ENCODE measurements at regions of chr5 and their contacts with region 1.

Region 1: GRCh38 chr5:140432916-140433315 is 31.3 kb downstream of the ANKHD1 start:
- DNase-seq: no peak
- ATAC-seq: no peak
- H3K4me3 ChIP-seq: no peak overlapping the region
- H3K4me3 Mint-ChIP-seq: no peak overlapping the region
- H3K27ac ChIP-seq: no peak overlapping the region
- H3K27ac Mint-ChIP-seq: no peak overlapping the region
- H3K4me1 ChIP-seq: peaks cover 0 to 3% of the 10 kb centered on the region in 2 donors
- H3K4me1 Mint-ChIP-seq: peaks cover 20% of the 10 kb centered on the region
- H3K27me3 ChIP-seq: no peaks in the 10 kb centered on the region
- H3K27me3 Mint-ChIP-seq: no peaks in the 10 kb centered on the region
- CTCF ChIP-seq: no peak

Region 2: GRCh38 chr5:140344683-140345423 is 88.1 kb before region 1 on chr5:
- CTCF ChIA-PET with region 1: no interaction called
- POLR2A ChIA-PET with region 1: no interaction called
- intact Hi-C with region 1: no loop called
- DNase-seq: no peak
- ATAC-seq: no peak
- H3K4me3 ChIP-seq: no peak overlapping the region
- H3K4me3 Mint-ChIP-seq: peak overlapping the region; percentile 10
- H3K27ac ChIP-seq: no peak overlapping the region
- H3K27ac Mint-ChIP-seq: no peak overlapping the region
- H3K4me1 ChIP-seq: peaks cover 52 to 68% of the 10 kb centered on the region in 2 donors
- H3K4me1 Mint-ChIP-seq: peaks cover 57% of the 10 kb centered on the region
- H3K27me3 ChIP-seq: peaks cover 0 to 16% (median 0%) of the 10 kb centered on the region in 4 experiments
- H3K27me3 Mint-ChIP-seq: peaks cover 4% of the 10 kb centered on the region
- CTCF ChIP-seq: no peak

Region 3: DNA sequence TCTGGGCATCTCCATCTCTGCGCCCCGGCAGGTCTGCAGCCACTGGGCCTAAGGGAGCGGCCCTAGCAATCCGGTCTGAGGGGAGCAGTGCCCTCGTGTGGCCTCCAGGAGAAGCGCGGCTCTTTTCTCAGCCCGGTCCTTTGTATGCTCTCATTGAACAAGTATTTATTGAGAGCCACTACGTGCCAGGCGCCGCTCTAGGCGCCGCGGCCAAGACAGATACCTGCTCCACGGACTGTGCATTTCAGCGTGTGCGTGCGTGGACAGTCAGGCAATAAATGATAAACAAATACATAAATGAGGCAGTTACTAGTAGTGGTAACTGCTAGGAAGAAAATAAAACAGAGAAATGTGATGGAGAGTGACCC is 75.2 kb before region 1 on chr5:
- CTCF ChIA-PET with region 1: no interaction called
- POLR2A ChIA-PET with region 1: no interaction called
- intact Hi-C with region 1: no loop called
- DNase-seq: peak; percentile 83
- ATAC-seq: peak; percentile 99
- H3K4me3 ChIP-seq: peak overlapping the region in 1 of 5 experiments; percentile 18
- H3K4me3 Mint-ChIP-seq: peak overlapping the region; percentile 46
- H3K27ac ChIP-seq: no peak overlapping the region
- H3K27ac Mint-ChIP-seq: no peak overlapping the region
- H3K4me1 ChIP-seq: peaks cover 6 to 12% of the 10 kb centered on the region in 2 donors
- H3K4me1 Mint-ChIP-seq: peaks cover 6% of the 10 kb centered on the region
- H3K27me3 ChIP-seq: no peaks in the 10 kb centered on the region
- H3K27me3 Mint-ChIP-seq: peaks cover 8% of the 10 kb centered on the region
- CTCF ChIP-seq: peak; percentile 86

Region 4: DNA sequence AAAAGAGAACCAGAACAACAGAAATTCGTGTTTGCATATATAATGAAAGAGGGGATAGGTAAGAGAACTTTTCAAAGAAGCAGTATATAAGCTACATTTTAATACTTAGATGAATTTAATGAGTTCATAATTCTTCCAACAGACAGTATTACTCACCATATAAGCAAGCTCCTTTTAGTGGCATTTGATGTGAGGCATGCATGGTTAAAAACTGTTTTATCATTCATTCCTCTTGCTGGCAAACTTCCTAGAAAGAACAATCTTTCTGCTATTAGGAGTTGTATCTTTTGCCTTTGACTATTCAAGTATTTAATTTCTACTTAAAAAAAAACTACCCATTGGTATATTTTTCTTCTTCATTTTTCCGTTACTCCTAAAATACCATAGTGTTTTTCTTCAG is 48.8 kb after region 1 on chr5:
- CTCF ChIA-PET with region 1: no interaction called
- POLR2A ChIA-PET with region 1: no interaction called
- intact Hi-C with region 1: loop called (anchors 5 kb)
- DNase-seq: no peak
- ATAC-seq: no peak
- H3K4me3 ChIP-seq: no peak overlapping the region
- H3K4me3 Mint-ChIP-seq: no peak overlapping the region
- H3K27ac ChIP-seq: no peak overlapping the region
- H3K27ac Mint-ChIP-seq: no peak overlapping the region
- H3K4me1 ChIP-seq: no peaks in the 10 kb centered on the region
- H3K4me1 Mint-ChIP-seq: no peaks in the 10 kb centered on the region
- H3K27me3 ChIP-seq: no peaks in the 10 kb centered on the region
- H3K27me3 Mint-ChIP-seq: no peaks in the 10 kb centered on the region
- CTCF ChIP-seq: no peak